Activated CD8-positive, alpha-beta memory T cell treated with anti-CD3 and anti-CD28 coated beads, Interleukin-2, amount 10 ng/mL, durations not matched to agents 7 days and 5 days (primary cell): ENCODE measurements at regions of chr20 and their contacts with region 1.

Region 1: DNA sequence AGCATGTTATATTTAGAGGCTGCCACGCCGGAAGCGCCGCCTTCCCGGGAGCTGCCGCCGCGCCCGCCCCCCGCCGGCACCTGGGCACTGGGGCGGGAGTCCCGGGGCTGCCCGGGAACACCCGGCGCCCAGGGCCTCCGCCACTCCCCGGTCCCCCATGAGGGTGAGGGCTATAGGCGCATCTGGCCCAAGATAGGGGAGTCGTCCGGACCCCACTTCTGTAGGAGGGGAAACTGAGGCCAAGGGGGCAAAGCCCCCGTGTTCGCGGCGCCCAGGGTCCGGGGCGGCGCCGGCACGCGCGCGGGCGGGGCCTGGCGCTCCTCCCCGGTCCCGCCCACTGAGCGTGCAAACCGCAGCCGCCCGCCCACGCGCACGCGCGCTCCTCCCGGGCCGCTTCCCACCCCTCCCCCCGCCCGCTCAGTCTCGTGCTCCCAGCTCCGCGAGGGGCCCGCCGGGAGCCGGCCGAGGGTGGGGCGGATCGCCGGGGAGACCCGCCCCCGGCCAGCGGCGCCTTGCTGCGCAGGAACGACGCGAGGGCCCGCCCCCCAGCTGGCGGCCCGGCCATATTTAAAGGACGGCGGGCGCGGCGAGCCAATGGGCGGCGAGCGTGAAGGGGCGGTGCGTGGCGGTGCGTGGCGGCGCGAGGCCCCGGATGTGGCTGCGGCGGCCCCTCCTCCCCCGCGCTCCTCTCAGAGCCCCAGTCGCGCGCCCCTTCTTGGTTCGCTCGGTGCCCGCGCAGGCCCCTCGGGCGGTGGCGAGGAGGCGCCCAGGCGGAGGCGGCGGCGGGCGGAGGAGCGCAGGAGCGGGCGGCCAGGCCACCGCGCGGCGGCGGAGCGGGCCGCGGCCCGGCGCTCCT is at the start of gene LSM14B:
- DNase-seq: peak; percentile 96
- ATAC-seq: peak; percentile 90
- H3K4me3 Mint-ChIP-seq: peak within 1 kb of the TSS; percentile 82
- H3K27ac Mint-ChIP-seq: peak within 1 kb of the TSS; percentile 83
- H3K4me1 Mint-ChIP-seq: peaks cover 37% of the 10 kb centered on the region
- H3K27me3 Mint-ChIP-seq: peaks cover 2% of the 10 kb centered on the region
- total RNA-seq, gene LSM14B: 34.6 to 34.8 TPM

Region 2: DNA sequence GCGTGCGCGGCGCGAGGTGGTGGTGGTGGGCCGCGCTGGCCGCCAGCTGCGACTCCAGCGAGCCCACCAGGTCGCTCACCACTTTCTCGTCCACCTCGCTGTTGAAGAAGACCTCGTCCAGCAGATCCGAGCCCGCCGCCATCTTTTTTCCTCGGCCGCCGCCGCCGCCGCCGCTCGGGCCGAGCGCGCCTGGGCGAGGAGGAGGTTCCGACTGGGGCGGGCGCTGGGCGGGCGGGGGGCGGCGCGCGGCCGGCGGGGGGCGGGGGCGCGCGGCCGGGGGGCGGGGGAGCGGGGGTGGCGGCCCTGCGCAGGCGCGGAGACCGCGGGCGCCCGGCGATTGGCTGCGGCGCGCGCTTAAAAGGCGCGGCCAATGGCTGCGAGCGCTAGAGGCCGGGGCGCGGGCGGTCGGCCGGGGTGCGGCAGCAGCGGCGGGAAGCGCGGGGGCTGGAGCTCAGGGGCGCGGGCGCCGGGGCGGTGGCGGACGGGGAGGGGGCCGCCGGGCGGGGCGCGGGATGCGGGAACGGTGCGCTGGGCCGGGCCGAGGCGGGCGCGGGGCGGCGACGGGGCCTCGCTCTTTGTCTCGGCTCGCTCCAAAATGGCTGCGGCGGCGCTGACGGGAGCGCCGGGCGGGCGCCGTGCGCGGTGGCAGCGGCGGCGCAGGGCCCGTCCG is 56.2 kb before region 1 on chr20 and contains the start of gene TAF4:
- CTCF ChIA-PET with region 1: interaction called, 11 read pairs
- DNase-seq: peak; percentile 82
- ATAC-seq: peak; percentile 82
- H3K4me3 Mint-ChIP-seq: peak within 1 kb of the TSS; percentile 73
- H3K27ac Mint-ChIP-seq: peak within 1 kb of the TSS; percentile 78
- H3K4me1 Mint-ChIP-seq: peaks cover 34% of the 10 kb centered on the region
- H3K27me3 Mint-ChIP-seq: peaks cover 3% of the 10 kb centered on the region
- total RNA-seq, gene TAF4: 21.1 to 24.2 TPM

Region 3: GRCh38 chr20:62111148-62111547 is 10.9 kb before region 1 on chr20:
- CTCF ChIA-PET with region 1: no interaction called
- DNase-seq: no peak
- ATAC-seq: no peak
- H3K4me3 Mint-ChIP-seq: no peak overlapping the region
- H3K27ac Mint-ChIP-seq: no peak overlapping the region
- H3K4me1 Mint-ChIP-seq: no peaks in the 10 kb centered on the region
- H3K27me3 Mint-ChIP-seq: no peaks in the 10 kb centered on the region

Region 4: DNA sequence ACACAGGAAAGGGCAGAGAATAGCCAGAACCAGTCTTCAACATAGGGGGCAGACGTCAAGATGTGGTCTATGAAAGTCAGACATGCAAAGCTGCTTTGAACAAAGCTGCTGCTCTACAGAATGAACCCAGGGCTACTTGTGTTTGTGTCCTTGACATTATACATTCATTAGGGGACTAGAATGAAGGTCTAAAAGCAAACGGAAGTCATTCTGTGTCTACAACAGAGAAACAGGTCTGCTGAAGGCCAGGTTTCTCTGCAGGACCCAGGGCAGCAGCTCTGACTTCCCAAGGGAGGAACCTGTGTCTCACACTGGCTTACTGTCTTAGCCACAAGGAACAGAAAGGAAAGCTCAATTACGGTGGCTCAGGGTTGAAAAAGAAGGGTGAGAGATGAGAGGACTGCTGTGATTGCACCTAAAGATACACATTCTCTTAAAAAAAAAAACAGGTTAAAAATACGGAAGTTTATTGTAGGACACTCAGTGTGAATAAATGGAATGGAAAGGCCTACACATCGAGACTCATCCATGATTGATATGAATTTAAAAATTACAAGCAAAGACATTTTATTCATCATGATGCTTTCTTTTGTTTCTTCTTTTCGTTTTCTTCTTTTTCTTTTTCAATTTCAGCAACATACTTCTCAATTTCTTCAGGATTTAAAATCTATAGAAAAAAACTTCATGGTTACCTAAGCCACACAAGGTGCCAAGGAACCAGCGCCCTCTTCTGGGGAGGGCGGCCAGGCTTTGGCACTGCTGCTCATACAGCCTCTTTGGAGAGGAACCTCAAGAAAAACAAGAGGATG is 14.5 kb after region 1 on chr20:
- CTCF ChIA-PET with region 1: interaction called, 20 read pairs
- DNase-seq: peak; percentile 76
- ATAC-seq: peak; percentile 63
- H3K4me3 Mint-ChIP-seq: no peak overlapping the region
- H3K27ac Mint-ChIP-seq: peak overlapping the region; percentile 31
- H3K4me1 Mint-ChIP-seq: peaks cover 42% of the 10 kb centered on the region
- H3K27me3 Mint-ChIP-seq: no peaks in the 10 kb centered on the region

Region 5: DNA sequence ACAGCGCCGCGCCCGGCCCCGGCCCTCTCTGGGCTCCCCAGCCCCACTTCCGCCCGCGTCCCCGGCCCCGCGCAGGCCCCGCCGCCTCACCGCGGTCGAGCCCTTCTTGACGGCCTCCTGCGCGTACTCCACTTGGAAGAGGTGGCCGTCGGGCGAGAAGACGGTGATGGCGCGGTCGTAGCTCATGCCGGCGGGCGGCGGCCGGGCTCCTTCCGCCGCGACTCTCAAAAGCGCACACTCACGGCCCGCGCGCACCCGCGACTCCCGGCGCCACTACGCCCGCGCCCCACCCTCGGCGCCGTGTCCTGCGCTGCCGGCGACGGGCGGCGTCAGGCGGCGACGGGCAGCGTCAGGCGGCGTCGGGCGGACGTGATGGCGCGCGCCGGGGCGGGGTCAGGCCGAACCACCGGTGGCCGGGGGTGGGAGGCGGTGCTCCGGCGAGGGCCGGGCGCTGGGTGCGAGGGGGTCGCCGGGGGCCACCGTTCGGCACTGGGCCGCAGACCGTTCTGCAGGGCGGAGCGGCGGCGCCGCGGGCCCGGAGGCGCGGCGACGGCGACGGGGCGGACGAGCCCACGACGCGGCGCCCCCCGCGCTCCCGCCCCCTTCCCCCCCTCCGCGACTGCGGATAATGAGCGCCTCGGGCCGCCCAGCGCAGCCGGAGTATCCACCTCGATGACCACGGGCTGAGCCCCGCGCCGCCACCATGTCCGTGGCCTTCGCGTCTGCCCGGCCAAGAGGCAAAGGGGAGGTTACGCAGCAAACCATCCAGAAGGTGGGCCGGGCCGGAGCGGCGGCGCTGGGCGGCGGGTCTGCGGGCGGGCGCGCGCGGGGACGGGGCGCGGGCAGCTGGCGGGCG is 21.3 kb after region 1 on chr20 and contains the starts of genes PSMA7 and SS18L1:
- CTCF ChIA-PET with region 1: interaction called, 20 read pairs
- DNase-seq: peak; percentile 88
- ATAC-seq: peak; percentile 90
- H3K4me3 Mint-ChIP-seq: peak within 1 kb of the TSS; percentile 95
- H3K27ac Mint-ChIP-seq: peak within 1 kb of the TSS; percentile 91
- H3K4me1 Mint-ChIP-seq: peaks cover 48% of the 10 kb centered on the region
- H3K27me3 Mint-ChIP-seq: no peaks in the 10 kb centered on the region
- total RNA-seq, gene PSMA7: 287 to 359 TPM
- total RNA-seq, gene SS18L1: 19.5 to 23.0 TPM

Region 6: DNA sequence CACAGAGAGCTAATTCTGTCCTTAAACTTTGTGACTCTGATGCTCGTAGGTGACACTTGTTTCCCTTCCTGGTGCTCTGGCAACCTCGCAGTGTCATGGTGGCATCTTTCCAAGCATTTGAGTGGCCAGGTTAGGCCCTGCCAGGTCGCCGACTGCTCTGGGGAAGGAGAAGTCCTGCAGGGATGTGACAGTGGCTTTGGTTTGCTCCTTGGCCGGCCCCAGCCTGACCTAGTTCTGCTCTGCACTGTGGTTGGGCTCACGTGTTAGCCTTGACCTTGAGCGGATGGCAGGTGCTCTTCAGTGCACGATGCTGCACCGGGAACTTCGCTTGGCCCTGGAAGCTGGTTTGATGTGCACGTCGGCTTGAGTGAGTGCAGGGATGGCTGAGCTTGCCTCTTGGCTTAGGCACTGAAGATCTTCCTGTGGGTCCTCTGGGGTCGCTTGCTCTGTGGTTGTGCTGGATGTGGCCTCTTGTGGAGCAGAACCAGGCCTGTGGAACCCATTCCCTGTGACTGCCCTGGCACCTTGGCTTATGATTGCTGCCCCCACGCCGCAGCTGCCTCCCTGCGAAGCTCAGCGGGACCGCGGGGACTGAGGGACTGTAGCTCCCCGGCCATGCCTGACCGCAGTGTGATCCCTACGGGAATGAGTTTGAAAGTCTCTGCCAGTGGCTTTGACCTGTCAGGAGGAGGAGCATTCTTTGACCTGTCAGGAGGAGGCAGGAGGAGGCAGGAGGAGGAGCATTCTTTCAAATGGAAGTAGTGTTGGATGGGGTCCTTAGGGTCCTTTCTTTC is 125.1 kb after region 1 on chr20:
- CTCF ChIA-PET with region 1: no interaction called
- DNase-seq: no peak
- ATAC-seq: no peak
- H3K4me3 Mint-ChIP-seq: no peak overlapping the region
- H3K27ac Mint-ChIP-seq: no peak overlapping the region
- H3K4me1 Mint-ChIP-seq: peaks cover 7% of the 10 kb centered on the region
- H3K27me3 Mint-ChIP-seq: no peaks in the 10 kb centered on the region